H1 (cell line): ENCODE measurements at regions of chr19 and their contacts with region 1.

Region 1: GRCh38 chr19:45363861-45364459 is 6.4 kb downstream of the ERCC2 start:
- DNase-seq: no peak
- H3K4me3 ChIP-seq: no peak overlapping the region
- H3K27ac ChIP-seq: no peak overlapping the region
- H3K4me1 ChIP-seq: peaks cover 0 to 3% (median 0%) of the 10 kb centered on the region in 4 experiments; a peak in 1 of 7 replicates
- H3K27me3 ChIP-seq: no peaks in the 10 kb centered on the region
- CTCF ChIP-seq: no peak
- EP300 ChIP-seq: no peak
- POLR2A ChIP-seq: no peak
- RAD21 ChIP-seq: no peak

Region 2: GRCh38 chr19:45352914-45353796 is 10.8 kb before region 1 on chr19:
- CTCF ChIA-PET with region 1: interaction called, 3 read pairs
- POLR2A ChIA-PET with region 1: interaction called, 36 read pairs
- DNase-seq: no peak
- H3K4me3 ChIP-seq: no peak overlapping the region
- H3K27ac ChIP-seq: no peak overlapping the region
- H3K4me1 ChIP-seq: peaks cover 0 to 7% (median 2%) of the 10 kb centered on the region in 4 experiments; a peak in 2 of 7 replicates
- H3K27me3 ChIP-seq: no peaks in the 10 kb centered on the region
- CTCF ChIP-seq: no peak
- EP300 ChIP-seq: no peak
- POLR2A ChIP-seq: no peak
- RAD21 ChIP-seq: no peak